ENCODE measurements at regions of chr5 and their contacts with region 1.

Region 1: GRCh38 chr5:73298772-73299630 is 126.0 kb downstream of the TMEM174 start:
- DNase-seq: no peak
- H3K4me3 ChIP-seq: peak overlapping the region in 1 of 2 donors; percentile 33
- H3K27ac ChIP-seq: no peak overlapping the region
- H3K4me1 ChIP-seq: peaks cover 24% of the 10 kb centered on the region
- H3K27me3 ChIP-seq: peaks cover 6% of the 10 kb centered on the region
- CTCF ChIP-seq: no peak
- POLR2A ChIP-seq: no peak

Region 2: GRCh38 chr5:73215891-73216610 is 83.0 kb before region 1 on chr5:
- intact Hi-C with region 1: loop called (anchors 10 kb)
- DNase-seq: no peak
- H3K4me3 ChIP-seq: peak overlapping the region; percentile 38 to 50
- H3K27ac ChIP-seq: no peak overlapping the region
- H3K4me1 ChIP-seq: peaks cover 12% of the 10 kb centered on the region
- H3K27me3 ChIP-seq: peaks cover 4% of the 10 kb centered on the region
- CTCF ChIP-seq: peak; percentile 69 to 81 (median 78)
- POLR2A ChIP-seq: no peak

Region 3: DNA sequence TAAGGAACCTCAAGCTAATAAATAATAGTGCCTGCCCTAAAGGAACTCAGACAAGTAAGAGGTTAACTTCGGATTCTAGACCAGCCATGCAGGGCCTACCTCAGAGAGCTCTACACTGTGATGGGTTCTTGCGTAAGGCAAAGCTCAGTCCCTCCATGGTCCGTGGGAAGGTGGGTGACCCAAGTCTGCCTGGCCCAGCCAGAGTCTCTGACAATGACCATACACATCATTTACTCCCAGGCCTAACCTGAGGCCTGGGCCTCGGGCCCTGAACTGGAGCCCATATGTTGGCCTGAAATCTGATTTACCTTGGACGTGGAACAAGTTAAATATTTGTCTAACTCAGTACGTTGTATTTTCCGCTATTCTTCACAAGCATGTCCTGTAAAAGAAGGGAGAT is 70.9 kb before region 1 on chr5:
- intact Hi-C with region 1: no loop called
- DNase-seq: no peak
- H3K4me3 ChIP-seq: no peak overlapping the region
- H3K27ac ChIP-seq: no peak overlapping the region
- H3K4me1 ChIP-seq: peaks cover 9% of the 10 kb centered on the region
- H3K27me3 ChIP-seq: no peaks in the 10 kb centered on the region
- CTCF ChIP-seq: no peak
- POLR2A ChIP-seq: no peak

Region 4: DNA sequence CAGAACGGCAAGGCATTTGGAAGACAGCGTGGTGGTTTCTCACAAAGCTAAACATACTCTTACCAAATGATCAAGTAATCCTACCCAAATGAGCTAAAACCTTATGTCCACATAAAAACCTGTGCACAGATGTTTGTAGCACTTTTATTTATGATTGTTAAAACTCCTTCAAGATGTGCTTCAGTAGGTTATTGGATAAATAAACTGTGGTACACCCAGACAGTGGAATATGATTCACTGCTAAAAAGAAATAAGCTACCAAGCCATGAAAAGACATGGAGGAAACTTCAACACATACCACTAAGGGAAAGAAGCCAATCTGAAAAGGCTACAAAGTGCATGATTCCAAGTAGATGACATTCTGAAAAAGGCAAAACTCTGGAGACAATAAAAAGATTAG is 55.4 kb after region 1 on chr5:
- intact Hi-C with region 1: no loop called
- DNase-seq: no peak
- H3K4me3 ChIP-seq: no peak overlapping the region
- H3K27ac ChIP-seq: no peak overlapping the region
- H3K4me1 ChIP-seq: no peaks in the 10 kb centered on the region
- H3K27me3 ChIP-seq: no peaks in the 10 kb centered on the region
- CTCF ChIP-seq: no peak
- POLR2A ChIP-seq: no peak

Region 5: DNA sequence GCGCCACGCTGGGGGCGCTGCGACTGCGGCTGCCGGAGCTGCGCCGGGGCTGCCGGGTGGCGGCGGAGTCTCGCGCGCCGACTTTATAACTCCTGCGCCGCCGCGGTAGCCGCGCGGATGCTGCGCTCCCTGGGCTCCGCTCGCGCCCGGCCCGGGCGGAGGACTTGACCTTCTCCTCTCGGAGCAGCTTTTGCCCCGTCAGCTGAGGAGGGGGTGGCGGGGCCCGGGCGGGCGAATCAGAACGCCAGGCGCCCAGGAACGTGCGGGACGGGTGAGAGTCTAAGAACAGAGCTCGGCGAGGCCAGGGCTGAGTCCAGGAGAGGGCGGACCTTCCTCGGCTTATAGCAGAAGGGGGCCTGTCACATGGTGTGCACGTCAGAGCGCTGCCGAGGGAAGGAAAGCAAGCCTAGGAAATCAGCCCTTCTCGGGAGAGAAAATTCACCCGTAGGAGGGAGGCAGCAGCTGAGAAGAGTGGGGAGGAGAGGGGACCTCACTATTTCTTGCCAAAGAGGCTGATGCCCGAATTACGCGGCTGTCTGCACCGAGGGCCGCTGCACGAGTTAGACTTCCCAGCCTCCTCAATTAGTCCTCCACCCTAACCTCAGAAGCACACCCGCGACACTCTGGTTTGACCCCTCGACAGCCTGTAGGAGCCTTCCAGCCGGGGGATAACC is 149.6 kb after region 1 on chr5 and contains the start of gene FOXD1:
- intact Hi-C with region 1: loop called (anchors 5 kb)
- DNase-seq: no peak
- H3K4me3 ChIP-seq: peak within 1 kb of the TSS; percentile 34 to 55
- H3K27ac ChIP-seq: no peak within 1 kb of the TSS
- H3K4me1 ChIP-seq: peaks cover 19% of the 10 kb centered on the region
- H3K27me3 ChIP-seq: peaks cover 29% of the 10 kb centered on the region
- CTCF ChIP-seq: no peak
- POLR2A ChIP-seq: peak in 1 of 2 donors; percentile 35
- total RNA-seq, gene FOXD1: not detected